ENCODE measurements at regions of chr5 and their contacts with region 1.

Region 1: GRCh38 chr5:170100066-170100943 is 5.4 kb upstream of the FOXI1 start:
- DNase-seq: peak; percentile 97
- H3K4me3 ChIP-seq: no peak overlapping the region
- H3K27ac ChIP-seq: no peak overlapping the region
- H3K4me1 ChIP-seq: peaks cover 0 to 8% (median 3%) of the 10 kb centered on the region in 4 donors
- H3K27me3 ChIP-seq: no peaks in the 10 kb centered on the region
- CTCF ChIP-seq: peak; percentile 54 to 65 (median 59)
- EP300 ChIP-seq: no peak
- POLR2A ChIP-seq: no peak

Region 2: GRCh38 chr5:169742771-169743296 is 357.5 kb before region 1 on chr5:
- intact Hi-C with region 1: no loop called
- DNase-seq: no peak
- H3K4me3 ChIP-seq: no peak overlapping the region
- H3K27ac ChIP-seq: no peak overlapping the region
- H3K4me1 ChIP-seq: no peaks in the 10 kb centered on the region
- H3K27me3 ChIP-seq: no peaks in the 10 kb centered on the region
- CTCF ChIP-seq: no peak
- EP300 ChIP-seq: no peak
- POLR2A ChIP-seq: no peak

Region 3: GRCh38 chr5:170183816-170184687 is 83.7 kb after region 1 on chr5:
- intact Hi-C with region 1: loop called (anchors 2 kb)
- DNase-seq: no peak
- H3K4me3 ChIP-seq: no peak overlapping the region
- H3K27ac ChIP-seq: no peak overlapping the region
- H3K4me1 ChIP-seq: no peaks in the 10 kb centered on the region
- H3K27me3 ChIP-seq: no peaks in the 10 kb centered on the region
- CTCF ChIP-seq: peak; percentile 42 to 62 (median 48)
- EP300 ChIP-seq: no peak
- POLR2A ChIP-seq: no peak

Region 4: DNA sequence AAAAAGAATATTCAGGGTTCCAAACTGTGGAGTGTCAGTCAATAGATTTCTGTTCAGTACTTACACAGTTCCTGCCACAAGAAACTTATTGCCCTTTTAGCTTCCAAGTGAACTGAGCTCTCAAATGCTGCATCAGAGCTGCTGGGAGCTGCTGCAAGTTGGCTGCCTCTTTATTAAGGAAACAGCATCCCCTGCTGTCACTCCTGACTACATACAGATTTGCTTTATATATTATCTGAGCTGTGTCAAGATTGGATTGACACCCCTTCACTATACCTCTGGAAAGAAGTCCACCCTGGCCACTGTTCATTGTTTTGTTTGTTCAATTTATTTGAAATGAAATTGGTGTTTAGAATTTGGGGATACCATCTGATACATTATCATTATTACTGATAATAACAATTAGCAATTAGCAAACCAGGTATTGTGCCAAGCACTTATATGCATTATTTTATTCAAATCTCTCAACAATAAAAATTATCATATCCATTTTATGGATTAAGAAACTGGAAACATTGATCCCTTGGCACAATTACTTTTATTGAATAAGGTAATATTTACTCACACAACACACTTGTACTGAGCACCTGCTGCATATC is 116.1 kb after region 1 on chr5:
- intact Hi-C with region 1: loop called (anchors 2 kb)
- DNase-seq: no peak
- H3K4me3 ChIP-seq: no peak overlapping the region
- H3K27ac ChIP-seq: no peak overlapping the region
- H3K4me1 ChIP-seq: peaks cover 0 to 27% (median 14%) of the 10 kb centered on the region in 4 donors
- H3K27me3 ChIP-seq: no peaks in the 10 kb centered on the region
- CTCF ChIP-seq: peak; percentile 37 to 65 (median 56)
- EP300 ChIP-seq: no peak
- POLR2A ChIP-seq: no peak

Region 5: DNA sequence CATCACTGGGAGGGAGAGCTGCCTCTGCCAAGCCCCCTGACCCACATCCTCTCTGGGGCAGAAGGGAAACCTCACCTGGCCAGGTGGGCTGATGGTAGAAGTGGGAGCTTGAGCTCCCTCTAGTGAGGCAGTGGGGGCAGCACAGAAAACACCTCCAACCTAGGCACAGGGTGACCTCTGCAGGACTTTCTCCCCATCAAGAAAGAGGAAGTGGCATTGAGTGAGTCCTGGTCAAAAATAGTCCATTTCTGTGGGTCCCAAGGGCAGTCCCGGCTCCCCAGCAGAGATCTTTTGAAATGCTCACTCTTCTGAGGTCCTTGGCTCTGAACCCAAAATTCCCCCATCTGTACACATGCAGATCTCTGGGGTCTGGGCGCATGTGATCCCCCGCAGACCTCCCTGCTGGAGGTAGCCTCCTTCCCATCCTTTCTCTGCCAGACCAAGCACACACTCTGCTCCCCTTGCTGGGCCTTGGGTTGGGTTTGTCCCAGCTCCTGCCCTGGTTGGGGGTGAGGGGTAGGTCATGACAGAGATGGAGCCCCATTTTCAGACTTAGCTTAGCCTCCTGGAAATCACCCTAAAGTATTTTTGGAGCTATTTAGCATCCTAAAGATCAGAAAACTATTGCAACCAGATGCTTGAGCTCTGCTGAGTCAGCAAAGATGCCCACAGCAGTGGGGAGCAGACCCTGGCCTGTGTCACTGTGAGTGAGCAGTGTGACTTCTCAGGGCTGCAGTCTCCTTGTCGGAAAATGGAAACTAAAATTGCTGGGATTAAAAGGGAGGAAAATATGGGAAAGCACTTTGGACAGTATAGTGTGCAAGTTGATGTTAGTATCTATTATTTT is 238.9 kb after region 1 on chr5:
- intact Hi-C with region 1: loop called (anchors 10 kb)
- DNase-seq: no peak
- H3K4me3 ChIP-seq: no peak overlapping the region
- H3K27ac ChIP-seq: no peak overlapping the region
- H3K4me1 ChIP-seq: peaks cover 0 to 3% (median 0%) of the 10 kb centered on the region in 4 donors
- H3K27me3 ChIP-seq: no peaks in the 10 kb centered on the region
- CTCF ChIP-seq: peak; percentile 8 to 51 (median 43)
- EP300 ChIP-seq: no peak
- POLR2A ChIP-seq: no peak

Region 6: DNA sequence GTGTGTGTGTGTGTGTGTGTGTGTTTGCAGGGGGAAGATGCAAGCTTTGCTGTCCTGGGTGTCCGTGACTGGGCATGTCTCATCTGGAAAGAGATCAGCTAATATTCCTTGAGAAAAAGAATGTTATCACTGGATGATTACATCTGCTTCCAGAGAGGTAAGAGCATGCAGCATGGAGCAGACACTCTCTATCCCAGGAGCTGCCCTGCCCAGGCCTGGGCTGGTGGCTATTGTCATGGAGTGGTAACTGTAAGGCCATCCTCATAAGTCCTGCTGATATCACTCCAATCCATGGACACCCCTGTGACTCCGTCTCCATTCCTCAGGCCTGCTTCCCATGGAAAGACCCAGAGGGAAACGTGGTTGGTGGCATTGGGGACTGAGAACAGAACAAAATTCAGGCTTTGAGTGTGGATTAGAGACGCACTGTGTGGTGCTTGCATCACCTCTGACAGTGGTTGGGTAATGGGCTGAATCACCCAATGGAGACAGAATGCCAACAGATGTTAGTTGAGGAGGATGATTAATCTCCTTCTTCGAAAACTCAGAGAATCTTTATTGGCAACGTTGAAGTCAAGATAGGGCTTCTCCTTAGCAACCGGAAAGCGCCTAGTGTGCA is 351.6 kb after region 1 on chr5:
- intact Hi-C with region 1: no loop called
- DNase-seq: peak; percentile 79
- H3K4me3 ChIP-seq: no peak overlapping the region
- H3K27ac ChIP-seq: no peak overlapping the region
- H3K4me1 ChIP-seq: no peaks in the 10 kb centered on the region
- H3K27me3 ChIP-seq: peaks cover 0 to 2% (median 0%) of the 10 kb centered on the region in 4 donors
- CTCF ChIP-seq: no peak
- EP300 ChIP-seq: no peak
- POLR2A ChIP-seq: no peak

Measured in esophagus muscularis mucosa (tissue), 4 donors.